GM23248 (cell line): ENCODE measurements at regions of chr7 and their contacts with region 1.

Region 1: GRCh38 chr7:32479574-32480200 is 10.5 kb downstream of the LSM5 start:
- DNase-seq: peak; percentile 71
- H3K4me3 ChIP-seq: no peak overlapping the region
- H3K27ac ChIP-seq: no peak overlapping the region
- H3K4me1 ChIP-seq: peaks cover 14% of the 10 kb centered on the region
- H3K27me3 ChIP-seq: no peaks in the 10 kb centered on the region

Region 2: DNA sequence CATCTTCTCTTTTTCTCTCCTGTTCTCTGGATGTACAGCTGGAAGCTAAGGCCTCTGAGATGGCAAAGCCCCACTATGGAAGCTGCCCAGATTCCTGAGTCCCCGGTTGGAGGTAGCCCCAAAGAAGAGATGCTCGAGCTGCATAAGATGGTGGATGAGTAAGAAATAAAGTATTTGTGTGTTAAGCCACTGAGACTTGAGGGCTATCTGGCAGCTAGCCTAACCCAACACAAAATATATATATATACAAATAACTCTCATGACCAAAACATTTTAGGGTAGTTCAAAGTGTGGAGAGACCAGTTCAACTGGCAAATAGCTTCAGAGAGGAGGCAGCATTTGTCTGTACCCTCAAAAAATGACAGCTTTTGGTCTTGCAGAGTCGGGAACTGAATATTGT is 337.0 kb before region 1 on chr7:
- in situ Hi-C with region 1: no loop called
- DNase-seq: peak; percentile 57
- H3K4me3 ChIP-seq: no peak overlapping the region
- H3K27ac ChIP-seq: no peak overlapping the region
- H3K4me1 ChIP-seq: no peaks in the 10 kb centered on the region
- H3K27me3 ChIP-seq: no peaks in the 10 kb centered on the region

Region 3: DNA sequence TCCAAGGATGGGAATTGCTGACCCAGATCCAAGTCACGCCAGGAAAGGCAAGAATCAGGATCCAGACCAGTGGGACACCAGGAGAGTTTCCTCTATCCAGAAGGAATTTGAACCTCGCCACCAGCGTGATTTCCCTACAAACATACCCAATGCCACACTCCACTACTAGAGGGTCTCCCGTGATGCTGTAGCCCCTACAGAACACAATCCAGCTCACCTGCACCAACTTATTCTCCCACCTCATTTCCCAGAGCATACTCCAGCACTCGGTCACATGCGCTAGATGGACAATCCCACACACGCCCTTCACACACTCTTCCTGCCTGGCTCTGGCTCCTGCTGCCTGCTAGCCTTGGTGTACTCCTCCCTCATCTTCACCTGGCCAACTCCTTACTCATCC is 267.4 kb before region 1 on chr7:
- in situ Hi-C with region 1: loop called (anchors 5 kb)
- DNase-seq: no peak
- H3K4me3 ChIP-seq: no peak overlapping the region
- H3K27ac ChIP-seq: no peak overlapping the region
- H3K4me1 ChIP-seq: no peaks in the 10 kb centered on the region
- H3K27me3 ChIP-seq: peaks cover 45% of the 10 kb centered on the region

Region 4: DNA sequence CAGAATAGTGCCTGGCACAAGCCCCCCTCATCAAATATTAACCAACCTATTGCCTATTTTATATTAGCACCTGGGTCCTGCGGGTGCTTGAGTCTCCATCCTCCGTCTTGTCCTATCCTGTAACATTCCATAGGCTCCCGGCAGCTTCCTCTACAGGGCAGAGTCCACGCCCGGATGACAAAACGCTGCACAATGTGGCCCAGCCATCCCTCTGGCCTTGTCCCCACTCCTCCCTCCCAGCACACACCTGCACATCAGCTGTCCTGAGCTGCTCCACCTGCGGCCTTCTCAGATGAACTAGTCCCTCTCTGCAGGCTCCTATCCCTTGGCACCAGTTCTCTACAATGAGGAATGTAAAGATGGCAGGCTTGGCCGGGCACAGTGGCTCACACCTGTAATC is 256.0 kb before region 1 on chr7:
- in situ Hi-C with region 1: no loop called
- DNase-seq: no peak
- H3K4me3 ChIP-seq: no peak overlapping the region
- H3K27ac ChIP-seq: no peak overlapping the region
- H3K4me1 ChIP-seq: no peaks in the 10 kb centered on the region
- H3K27me3 ChIP-seq: 0 out of 2 replicates have a peak, but pooled peaks cover 10% of the 10 kb centered on the region